H1 (cell line): ENCODE measurements at regions of chr3 and their contacts with region 1.

Region 1: GRCh38 chr3:197599089-197599765 is 43.5 kb upstream of the BDH1 start:
- DNase-seq: peak; percentile 67 to 88
- H3K4me3 ChIP-seq: no peak overlapping the region
- H3K27ac ChIP-seq: no peak overlapping the region
- H3K4me1 ChIP-seq: peaks cover 0 to 6% (median 2%) of the 10 kb centered on the region in 4 experiments; a peak in 2 of 7 replicates
- H3K27me3 ChIP-seq: no peaks in the 10 kb centered on the region
- CTCF ChIP-seq: peak; percentile 84 to 94 (median 89)
- EP300 ChIP-seq: no peak
- POLR2A ChIP-seq: no peak
- RAD21 ChIP-seq: peak; percentile 82 to 87

Region 2: DNA sequence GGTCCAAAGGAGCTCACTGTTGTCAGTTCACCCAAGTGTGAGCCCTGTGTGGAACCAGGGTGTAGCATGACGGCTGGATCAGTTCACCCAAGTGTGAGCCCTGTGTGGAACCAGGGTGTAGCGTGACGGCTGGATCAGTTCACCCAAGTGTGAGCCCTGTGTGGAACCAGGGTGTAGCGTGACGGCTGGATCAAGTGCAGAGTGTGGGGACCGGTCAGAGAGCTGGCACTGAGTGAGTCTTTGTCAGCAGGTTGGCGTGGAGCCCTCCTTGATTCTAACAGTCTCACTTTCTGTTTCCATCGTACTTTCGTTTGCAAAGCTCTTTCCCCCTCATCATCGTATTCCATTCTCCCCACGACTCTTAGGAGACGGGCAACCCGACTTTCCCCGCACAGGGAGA is 243.0 kb before region 1 on chr3:
- CTCF ChIA-PET with region 1: no interaction called
- POLR2A ChIA-PET with region 1: no interaction called
- DNase-seq: no peak
- H3K4me3 ChIP-seq: no peak overlapping the region
- H3K27ac ChIP-seq: no peak overlapping the region
- H3K4me1 ChIP-seq: peaks cover 0 to 6% (median under 1%) of the 10 kb centered on the region in 4 experiments; a peak in 3 of 7 replicates
- H3K27me3 ChIP-seq: no peaks in the 10 kb centered on the region; a peak in 1 of 7 replicates
- CTCF ChIP-seq: no peak
- EP300 ChIP-seq: no peak
- POLR2A ChIP-seq: no peak
- RAD21 ChIP-seq: no peak

Region 3: DNA sequence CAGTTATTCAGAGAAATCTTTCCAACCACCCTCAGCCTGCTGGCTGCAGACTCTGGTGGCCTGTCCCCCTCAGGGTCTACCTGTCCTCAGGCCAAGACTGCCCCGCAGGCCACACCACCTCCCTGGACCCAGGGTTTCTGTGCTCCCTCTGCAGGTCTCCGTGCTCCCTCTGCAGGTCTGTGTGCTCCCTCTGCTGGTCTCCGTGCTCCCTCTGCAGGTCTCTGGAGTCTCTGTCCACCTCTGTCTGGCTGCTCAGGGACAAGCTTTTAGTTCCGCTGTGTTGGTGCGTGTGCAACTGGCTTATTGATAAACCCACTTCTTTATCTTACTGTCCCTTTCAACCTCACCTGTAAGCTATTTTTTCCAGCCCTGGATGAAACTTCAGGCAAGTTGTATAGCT is 73.5 kb before region 1 on chr3:
- CTCF ChIA-PET with region 1: interaction called, 11 read pairs
- POLR2A ChIA-PET with region 1: no interaction called
- DNase-seq: no peak
- H3K4me3 ChIP-seq: no peak overlapping the region
- H3K27ac ChIP-seq: no peak overlapping the region
- H3K4me1 ChIP-seq: peaks cover 0 to 10% (median 9%) of the 10 kb centered on the region in 4 experiments; a peak in 6 of 7 replicates
- H3K27me3 ChIP-seq: no peaks in the 10 kb centered on the region
- CTCF ChIP-seq: peak in 2 of 3 experiments; percentile 48 to 76; a peak in 3 of 4 replicates
- EP300 ChIP-seq: no peak
- POLR2A ChIP-seq: no peak
- RAD21 ChIP-seq: peak; percentile 35 to 42; a peak in 3 of 4 replicates

Region 4: DNA sequence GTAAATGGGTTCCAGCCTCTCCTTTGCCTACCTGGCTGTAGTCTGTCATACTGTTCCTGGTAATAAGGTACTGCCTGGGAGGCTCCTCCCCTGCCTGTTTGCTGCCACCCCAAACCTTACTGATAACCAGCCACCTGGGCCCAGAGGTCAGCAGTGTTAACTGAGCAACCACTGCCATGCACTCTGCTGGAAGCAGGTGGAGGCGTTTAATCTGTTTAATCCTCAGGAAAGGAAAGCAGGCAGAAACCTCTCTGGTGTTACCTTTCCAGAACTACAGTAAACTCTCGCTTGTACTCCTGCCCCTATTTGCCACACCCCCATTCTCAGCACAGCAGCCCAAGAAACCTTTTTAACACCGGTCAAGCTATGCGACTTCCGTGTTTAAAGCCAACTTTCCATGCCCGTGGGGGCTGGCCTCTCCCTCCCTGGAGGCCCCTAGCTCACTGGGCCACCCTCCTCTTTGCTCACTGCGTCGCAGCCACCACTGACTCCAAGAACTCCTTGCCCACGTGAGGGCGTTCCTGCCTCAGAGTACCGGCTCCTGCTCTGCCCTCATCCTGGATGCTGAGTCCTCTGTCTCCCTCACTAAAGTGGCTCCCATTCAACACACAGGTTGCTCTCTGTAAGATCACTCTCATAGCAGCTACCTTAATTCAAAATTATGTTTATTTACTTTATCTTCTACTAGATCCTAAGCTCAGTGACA is 51.8 kb before region 1 on chr3:
- CTCF ChIA-PET with region 1: interaction called, 24 read pairs
- POLR2A ChIA-PET with region 1: interaction called, 3 read pairs
- DNase-seq: peak in 1 of 2 experiments; percentile 65
- H3K4me3 ChIP-seq: no peak overlapping the region
- H3K27ac ChIP-seq: no peak overlapping the region
- H3K4me1 ChIP-seq: peaks cover 10 to 35% (median 17%) of the 10 kb centered on the region in 4 experiments
- H3K27me3 ChIP-seq: no peaks in the 10 kb centered on the region; a peak in 2 of 7 replicates
- CTCF ChIP-seq: peak; percentile 63 to 78 (median 75)
- EP300 ChIP-seq: no peak
- POLR2A ChIP-seq: no peak
- RAD21 ChIP-seq: peak; percentile 82 to 86

Region 5: GRCh38 chr3:197580253-197580691 is 19.0 kb before region 1 on chr3:
- CTCF ChIA-PET with region 1: interaction called, 22 read pairs
- POLR2A ChIA-PET with region 1: interaction called, 4 read pairs
- DNase-seq: peak in 1 of 2 experiments; percentile 60
- H3K4me3 ChIP-seq: peak overlapping the region in 1 of 4 experiments; percentile 11; a peak in 1 of 8 replicates
- H3K27ac ChIP-seq: peak overlapping the region; percentile 44; the same call in 1 of the 2 replicates
- H3K4me1 ChIP-seq: peaks cover 11 to 27% (median 23%) of the 10 kb centered on the region in 4 experiments
- H3K27me3 ChIP-seq: no peaks in the 10 kb centered on the region
- CTCF ChIP-seq: no peak
- EP300 ChIP-seq: 0 out of 3 replicates have a peak, but pooled peaks of 1 of the 2 experiments have one; percentile 37
- POLR2A ChIP-seq: no peak
- RAD21 ChIP-seq: no peak

Region 6: GRCh38 chr3:197613199-197613598 is 14.0 kb after region 1 on chr3:
- CTCF ChIA-PET with region 1: interaction called, 34 read pairs
- POLR2A ChIA-PET with region 1: no interaction called
- DNase-seq: no peak
- H3K4me3 ChIP-seq: no peak overlapping the region
- H3K27ac ChIP-seq: no peak overlapping the region
- H3K4me1 ChIP-seq: no peaks in the 10 kb centered on the region
- H3K27me3 ChIP-seq: no peaks in the 10 kb centered on the region
- CTCF ChIP-seq: no peak
- EP300 ChIP-seq: no peak
- POLR2A ChIP-seq: no peak
- RAD21 ChIP-seq: no peak